ENCODE measurements at regions of chr16 and their contacts with region 1.

Region 1: GRCh38 chr16:48687421-48688038 is 77.5 kb upstream of the N4BP1 start:
- DNase-seq: peak; percentile 25 to 46 (median 43)
- ATAC-seq: peak; percentile 73
- H3K4me3 ChIP-seq: no peak overlapping the region
- H3K4me1 ChIP-seq: no peaks in the 10 kb centered on the region
- CTCF ChIP-seq: no peak

Region 2: DNA sequence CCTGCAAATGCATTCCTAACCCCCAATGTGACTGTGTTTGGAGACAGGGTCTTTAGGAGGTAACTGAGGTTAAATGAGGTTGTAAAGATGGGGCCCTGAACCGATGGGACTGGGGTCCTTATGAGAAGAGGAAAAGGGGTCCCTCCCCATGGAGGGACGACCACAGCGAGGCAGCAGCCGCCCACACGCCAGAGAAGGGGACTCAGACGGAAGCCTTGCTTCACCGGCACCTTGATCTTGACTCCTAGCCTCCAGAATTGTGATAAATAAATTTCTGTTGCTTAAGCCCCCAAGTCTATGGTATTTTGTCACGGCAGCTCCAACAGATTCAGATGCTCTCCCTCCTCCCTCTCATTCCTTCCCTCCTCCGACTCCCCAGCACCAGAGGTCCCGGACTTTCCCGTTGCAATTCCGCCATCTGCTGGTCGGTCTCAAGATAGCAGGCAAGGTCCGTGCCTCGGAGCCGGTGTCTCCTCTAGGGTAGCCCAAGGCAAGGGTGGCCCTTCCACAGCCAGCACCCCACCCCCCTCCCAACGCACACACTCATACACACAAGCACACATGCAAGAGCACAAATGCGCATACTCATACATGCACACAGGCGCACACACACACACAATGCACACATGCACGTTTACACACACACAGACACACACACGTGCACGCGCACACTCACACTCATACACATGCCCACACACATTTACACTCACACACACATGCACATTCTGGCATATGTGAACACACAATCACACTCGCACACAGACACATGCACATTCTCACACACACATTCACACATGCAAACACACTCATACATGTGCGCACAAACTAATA is 663.0 kb after region 1 on chr16:
- intact Hi-C with region 1: loop called (anchors 5 kb)
- DNase-seq: peak; percentile 54 to 82 (median 79)
- ATAC-seq: peak; percentile 77
- H3K4me3 ChIP-seq: no peak overlapping the region
- H3K4me1 ChIP-seq: no peaks in the 10 kb centered on the region
- CTCF ChIP-seq: peak; percentile 38